Adrenal gland (tissue), 19 donors: ENCODE measurements at regions of chr9 and their contacts with region 1.

Region 1: DNA sequence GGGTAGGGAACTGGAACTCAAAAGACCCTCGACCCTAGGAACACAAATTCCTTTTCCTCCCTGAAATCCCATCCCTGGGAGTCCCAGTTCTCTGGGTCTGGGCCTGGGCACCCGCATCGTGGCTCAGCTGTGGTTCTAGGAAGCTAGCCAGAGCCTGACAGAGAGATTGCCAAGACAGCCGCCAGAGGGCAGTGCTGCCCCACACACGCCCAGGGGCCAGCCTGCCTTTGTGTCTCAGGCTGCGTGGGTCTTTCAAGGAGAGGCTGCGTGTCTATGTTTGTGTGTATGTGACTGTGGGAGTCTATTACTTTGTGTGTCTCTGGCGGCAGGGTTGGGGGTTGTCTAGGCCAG is 32.0 kb upstream of the TTLL11 start:
- DNase-seq: peak; percentile 71 to 92 (median 84)
- H3K4me3 ChIP-seq: no peak overlapping the region
- H3K27ac ChIP-seq: no peak overlapping the region
- H3K4me1 ChIP-seq: peaks cover 0 to 17% of the 10 kb centered on the region in 2 donors
- H3K27me3 ChIP-seq: peaks cover 11% of the 10 kb centered on the region
- CTCF ChIP-seq: peak; percentile 91 to 99 (median 98)
- POLR2A ChIP-seq: no peak

Region 2: DNA sequence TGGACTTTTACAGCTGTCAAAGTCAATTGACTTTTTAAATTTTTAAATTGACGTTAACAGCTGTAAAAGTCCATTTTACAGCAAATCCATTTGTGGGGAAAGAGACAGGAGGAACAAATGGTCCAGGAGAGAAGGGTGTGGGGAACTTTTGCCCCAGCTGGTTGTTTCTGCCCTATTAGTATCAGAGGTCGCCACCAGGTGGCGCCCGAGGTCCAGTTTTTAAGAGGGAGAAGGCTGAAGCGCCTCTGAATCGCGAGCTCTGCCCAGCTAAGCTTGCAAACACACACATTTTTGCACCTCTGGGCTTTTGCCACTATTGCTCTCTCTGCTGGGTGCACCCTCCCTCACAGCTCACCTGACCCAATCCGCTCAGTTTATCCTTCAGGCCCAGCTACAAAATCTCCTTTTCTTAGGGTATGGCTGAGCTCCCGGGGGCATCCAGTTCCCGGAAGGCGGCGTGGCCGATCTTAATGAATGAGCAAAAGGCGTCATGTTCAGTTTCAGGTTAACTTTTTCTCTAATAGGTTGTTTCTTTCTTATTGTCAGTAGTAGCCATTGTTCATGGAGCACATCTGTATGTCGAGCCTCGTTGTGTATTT is 25.8 kb before region 1 on chr9:
- intact Hi-C with region 1: loop called in 1 of 2 experiments (anchors 2 kb)
- DNase-seq: peak; percentile 83 to 95 (median 93)
- H3K4me3 ChIP-seq: no peak overlapping the region
- H3K27ac ChIP-seq: peak overlapping the region in 2 of 5 donors; percentile 81 to 83
- H3K4me1 ChIP-seq: peaks cover 22% of the 10 kb centered on the region in 2 donors
- H3K27me3 ChIP-seq: no peaks in the 10 kb centered on the region
- CTCF ChIP-seq: peak; percentile 86 to 90 (median 88)
- POLR2A ChIP-seq: no peak

Region 3: GRCh38 chr9:122274055-122274454 is 148.9 kb after region 1 on chr9:
- intact Hi-C with region 1: no loop called
- DNase-seq: no peak
- H3K4me3 ChIP-seq: no peak overlapping the region
- H3K27ac ChIP-seq: no peak overlapping the region
- H3K4me1 ChIP-seq: peaks cover 0 to 8% of the 10 kb centered on the region in 2 donors
- H3K27me3 ChIP-seq: no peaks in the 10 kb centered on the region
- CTCF ChIP-seq: no peak
- POLR2A ChIP-seq: no peak

Region 4: DNA sequence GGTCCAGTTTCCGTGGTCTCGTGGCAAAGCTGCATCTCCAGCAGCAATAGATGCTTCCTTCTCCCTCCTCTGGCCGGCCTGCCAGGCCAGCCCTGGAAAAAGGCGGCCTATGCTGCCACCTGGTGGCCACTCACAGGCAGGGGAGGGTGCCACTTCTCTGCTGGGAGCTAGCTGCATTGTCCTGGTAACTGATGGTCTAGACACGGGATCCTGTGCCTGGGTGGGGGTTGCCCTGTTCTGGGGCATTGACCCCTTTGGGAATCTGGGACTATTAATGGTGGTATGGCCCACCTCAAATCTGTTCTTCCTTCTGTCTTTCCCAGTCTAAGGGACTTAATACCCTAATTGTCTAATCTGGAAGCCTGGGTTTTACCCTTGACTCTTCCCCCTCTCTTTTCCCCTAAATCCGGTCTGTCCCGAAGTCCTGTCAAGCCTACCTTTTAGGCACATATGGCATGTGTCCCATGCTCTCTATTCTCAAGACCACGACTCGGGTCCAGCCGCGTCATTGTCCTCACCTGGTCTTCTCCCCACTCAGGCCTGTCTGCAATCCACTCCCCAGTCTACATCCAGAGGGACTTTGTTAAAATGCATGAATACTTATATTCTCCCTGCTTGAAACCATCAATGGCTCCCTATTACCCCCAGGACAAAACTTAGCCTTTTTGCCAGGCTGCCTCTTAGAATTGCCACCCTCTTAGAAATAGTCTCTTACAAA is 225.7 kb after region 1 on chr9:
- intact Hi-C with region 1: loop called (anchors 2 kb)
- DNase-seq: peak; percentile 76 to 89 (median 81)
- H3K4me3 ChIP-seq: no peak overlapping the region
- H3K27ac ChIP-seq: no peak overlapping the region
- H3K4me1 ChIP-seq: peaks cover 8 to 12% of the 10 kb centered on the region in 2 donors
- H3K27me3 ChIP-seq: no peaks in the 10 kb centered on the region
- CTCF ChIP-seq: peak; percentile 94 to 98 (median 96)
- POLR2A ChIP-seq: no peak

Region 5: GRCh38 chr9:122453677-122454135 is 328.6 kb after region 1 on chr9:
- intact Hi-C with region 1: loop called (anchors 5 to 10 kb)
- DNase-seq: no peak
- H3K4me3 ChIP-seq: no peak overlapping the region
- H3K27ac ChIP-seq: no peak overlapping the region
- H3K4me1 ChIP-seq: no peaks in the 10 kb centered on the region
- H3K27me3 ChIP-seq: no peaks in the 10 kb centered on the region
- CTCF ChIP-seq: no peak
- POLR2A ChIP-seq: no peak

Region 6: DNA sequence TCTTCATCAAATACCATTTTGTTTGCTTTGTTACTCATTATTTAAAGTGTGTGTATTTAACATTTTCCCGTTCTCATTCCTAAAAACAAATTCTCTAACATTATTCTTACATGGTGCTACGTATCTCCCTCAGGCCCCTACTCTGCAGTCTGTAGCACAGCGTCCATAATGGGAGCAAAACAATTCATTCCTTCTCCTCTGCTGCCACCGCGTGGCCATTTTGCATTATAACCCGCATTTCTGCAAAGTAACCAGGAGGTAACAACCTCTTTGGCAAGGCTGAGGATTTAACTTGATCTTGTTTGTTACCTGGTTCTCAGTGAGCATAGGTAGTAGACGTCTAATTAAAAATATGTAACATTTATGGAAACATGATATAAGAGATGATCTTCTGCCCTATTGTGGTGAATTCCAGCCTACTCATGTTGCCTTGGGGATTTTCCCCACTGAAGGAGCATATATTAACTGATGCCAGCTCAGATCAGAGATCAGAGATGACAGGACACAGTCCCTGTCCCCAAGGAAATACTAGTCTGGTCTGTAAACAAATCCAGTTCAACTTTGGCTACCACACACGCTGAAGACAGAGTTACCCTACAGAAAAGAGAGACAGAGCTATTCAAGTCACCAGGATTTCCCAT is 685.3 kb after region 1 on chr9:
- intact Hi-C with region 1: loop called in 1 of 2 experiments (anchors 10 kb)
- DNase-seq: peak; percentile 55 to 90 (median 70)
- H3K4me3 ChIP-seq: no peak overlapping the region
- H3K27ac ChIP-seq: no peak overlapping the region
- H3K4me1 ChIP-seq: no peaks in the 10 kb centered on the region
- H3K27me3 ChIP-seq: no peaks in the 10 kb centered on the region
- CTCF ChIP-seq: peak; percentile 58 to 95 (median 84)
- POLR2A ChIP-seq: no peak